ENCODE measurements at regions of chr7 and their contacts with region 1.

Region 1: GRCh38 chr7:116249708-116250553 is 39.6 kb downstream of the TES start:
- DNase-seq: peak; percentile 88

Region 2: DNA sequence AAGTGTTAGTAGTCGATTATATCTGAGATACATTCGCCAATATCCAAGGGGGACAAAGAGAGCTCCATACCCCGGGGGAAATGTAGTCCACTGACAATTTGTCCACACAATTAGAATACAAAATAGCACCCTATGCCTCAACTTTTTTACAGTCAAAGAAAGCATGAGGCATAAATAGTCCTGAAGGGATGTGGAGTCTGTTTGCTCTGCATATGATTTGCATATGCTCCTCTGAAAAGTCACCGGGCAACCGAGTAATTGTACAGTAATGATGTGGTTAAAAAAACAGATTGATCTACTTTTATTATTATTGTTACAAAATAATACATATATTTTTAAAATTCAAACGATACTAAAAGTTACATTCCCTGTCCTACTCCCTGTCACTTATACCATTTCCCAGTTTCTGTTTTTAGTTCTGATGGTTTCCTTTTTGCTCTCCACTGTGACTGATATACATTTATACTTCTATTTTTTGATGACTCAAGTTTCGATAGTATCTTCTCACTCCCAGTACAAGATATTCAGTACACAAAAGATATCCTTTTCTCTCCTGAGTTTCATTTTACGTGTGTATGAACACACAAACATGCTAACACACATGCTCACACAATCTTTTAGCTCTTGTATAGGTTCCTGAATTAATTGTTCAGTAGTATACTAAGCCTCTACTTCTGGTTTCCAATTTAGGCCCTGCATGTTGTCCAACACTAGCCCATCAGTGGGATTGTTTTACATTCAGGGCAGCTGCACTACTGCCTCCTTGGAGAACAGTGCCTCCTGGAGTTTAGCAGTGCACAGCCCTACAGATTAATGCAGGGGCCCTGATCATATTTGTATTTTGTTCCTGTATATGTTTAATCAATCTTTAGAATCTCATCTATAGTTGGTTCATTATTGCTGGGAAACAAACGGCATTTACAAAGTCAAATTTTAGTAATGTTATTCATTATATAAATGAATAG is 91.3 kb after region 1 on chr7:
- in situ Hi-C with region 1: loop called (anchors 5 kb)
- DNase-seq: peak; percentile 87

Measured in SK-MEL-5 (cell line).